ENCODE measurements at regions of chr6 and their contacts with region 1.

Region 1: GRCh38 chr6:108492131-108492766 is 68.5 kb upstream of the FOXO3 start:
- DNase-seq: no peak
- H3K4me3 Mint-ChIP-seq: no peak overlapping the region
- H3K27ac Mint-ChIP-seq: no peak overlapping the region
- H3K4me1 Mint-ChIP-seq: no peaks in the 10 kb centered on the region
- H3K27me3 Mint-ChIP-seq: peaks cover 2% of the 10 kb centered on the region

Region 2: DNA sequence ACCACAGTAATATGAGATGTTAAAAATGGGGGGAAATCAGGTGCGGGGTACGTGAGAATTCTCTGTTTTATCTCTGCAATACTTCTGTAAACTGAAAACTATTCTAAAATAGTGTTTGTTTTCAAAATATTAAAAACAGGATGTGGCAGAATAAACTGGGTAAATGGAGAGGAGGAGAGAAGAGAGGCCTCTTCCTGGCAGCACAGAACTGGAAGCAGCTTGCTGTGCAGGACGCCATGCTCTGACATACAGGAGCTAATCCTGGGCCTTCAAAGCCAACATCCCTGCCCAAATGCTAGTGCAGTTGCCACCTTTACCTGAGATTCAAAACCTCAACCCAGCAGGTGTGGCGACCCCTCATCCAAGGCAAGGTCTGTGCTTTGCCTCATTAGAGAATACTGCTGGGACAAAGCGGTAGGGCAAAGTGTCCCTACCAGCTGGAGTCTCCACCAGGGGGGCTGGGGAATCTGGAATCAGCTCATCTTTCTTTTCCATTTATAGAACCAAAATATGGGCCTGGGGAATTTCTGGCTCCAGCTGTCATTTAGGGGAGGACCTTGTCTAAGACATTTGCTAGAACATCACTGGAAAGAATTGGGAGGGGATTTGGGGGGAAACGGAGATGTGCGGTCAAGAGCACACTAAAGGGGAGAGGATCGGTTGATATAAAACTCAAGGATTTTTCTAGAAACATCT is 735.4 kb before region 1 on chr6:
- CTCF ChIA-PET with region 1: no interaction called
- intact Hi-C with region 1: no loop called
- DNase-seq: no peak
- H3K4me3 Mint-ChIP-seq: no peak overlapping the region
- H3K27ac Mint-ChIP-seq: peak overlapping the region; percentile 28
- H3K4me1 Mint-ChIP-seq: peaks cover 44% of the 10 kb centered on the region
- H3K27me3 Mint-ChIP-seq: no peaks in the 10 kb centered on the region

Region 3: GRCh38 chr6:107977283-107977682 is 515.0 kb before region 1 on chr6:
- CTCF ChIA-PET with region 1: interaction called, 13 read pairs
- intact Hi-C with region 1: loop called (anchors 10 kb)
- DNase-seq: no peak
- H3K4me3 Mint-ChIP-seq: no peak overlapping the region
- H3K27ac Mint-ChIP-seq: no peak overlapping the region
- H3K4me1 Mint-ChIP-seq: no peaks in the 10 kb centered on the region
- H3K27me3 Mint-ChIP-seq: no peaks in the 10 kb centered on the region

Region 4: GRCh38 chr6:107982486-107982885 is 509.8 kb before region 1 on chr6:
- CTCF ChIA-PET with region 1: interaction called, 13 read pairs
- intact Hi-C with region 1: loop called (anchors 10 kb)
- DNase-seq: no peak
- H3K4me3 Mint-ChIP-seq: no peak overlapping the region
- H3K27ac Mint-ChIP-seq: no peak overlapping the region
- H3K4me1 Mint-ChIP-seq: no peaks in the 10 kb centered on the region
- H3K27me3 Mint-ChIP-seq: no peaks in the 10 kb centered on the region

Region 5: GRCh38 chr6:108174371-108175175 is 317.7 kb before region 1 on chr6:
- CTCF ChIA-PET with region 1: interaction called, 10 read pairs
- intact Hi-C with region 1: loop called (anchors 2 kb)
- DNase-seq: peak; percentile 57
- H3K4me3 Mint-ChIP-seq: no peak overlapping the region
- H3K27ac Mint-ChIP-seq: no peak overlapping the region
- H3K4me1 Mint-ChIP-seq: peaks cover 21% of the 10 kb centered on the region
- H3K27me3 Mint-ChIP-seq: peaks cover 76% of the 10 kb centered on the region

Region 6: DNA sequence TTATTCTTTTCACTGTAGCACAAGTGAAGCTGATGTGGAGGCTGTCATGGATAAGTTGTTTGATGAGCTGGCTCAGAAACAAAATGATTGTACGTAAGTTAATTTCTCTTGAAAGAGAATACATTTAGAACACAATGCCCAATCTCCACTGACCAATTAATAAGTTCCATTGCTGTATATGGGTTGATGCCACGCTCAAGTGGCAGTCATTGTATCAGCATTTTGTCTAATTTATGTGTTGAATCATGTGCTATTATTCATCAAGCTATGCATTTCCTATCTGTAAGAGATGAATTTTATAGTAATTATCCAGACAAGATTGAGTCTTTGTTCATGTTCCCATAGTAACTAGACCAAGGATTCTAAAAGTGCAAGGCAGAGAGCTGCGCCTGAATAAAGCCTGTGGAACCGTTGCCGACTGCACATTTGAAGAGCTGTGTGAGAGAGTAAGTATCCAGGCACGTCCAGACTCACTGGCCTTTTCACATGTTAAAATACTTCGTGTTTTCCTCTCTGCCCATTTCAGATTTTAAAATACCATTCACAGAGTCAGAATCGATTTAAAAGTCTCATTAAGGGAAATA is 15.3 kb before region 1 on chr6:
- CTCF ChIA-PET with region 1: interaction called, 14 read pairs
- intact Hi-C with region 1: no loop called
- DNase-seq: no peak
- H3K4me3 Mint-ChIP-seq: no peak overlapping the region
- H3K27ac Mint-ChIP-seq: no peak overlapping the region
- H3K4me1 Mint-ChIP-seq: peaks cover 3% of the 10 kb centered on the region
- H3K27me3 Mint-ChIP-seq: peaks cover 6% of the 10 kb centered on the region

Region 7: DNA sequence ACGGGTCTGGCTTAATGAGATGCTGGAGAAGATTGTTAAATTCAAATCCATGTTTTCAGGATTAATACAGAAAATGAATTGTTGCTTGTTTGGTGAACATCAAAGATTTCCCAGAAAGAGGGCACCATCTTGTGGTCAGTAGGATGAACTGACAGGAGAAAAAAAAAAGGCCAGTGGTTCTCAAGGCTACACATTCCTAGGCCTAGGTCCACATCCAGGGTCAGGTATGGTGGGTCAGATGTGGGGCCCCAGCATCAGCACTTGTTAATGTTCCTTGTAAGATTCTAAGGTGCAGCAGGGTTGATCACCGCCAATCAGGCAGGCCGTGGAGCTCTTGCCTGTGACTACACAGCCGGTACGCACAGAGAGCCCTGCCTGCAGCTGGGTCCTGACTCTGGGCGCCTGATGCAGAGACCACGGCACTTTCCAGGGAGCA is 34.5 kb after region 1 on chr6:
- CTCF ChIA-PET with region 1: interaction called, 14 read pairs
- intact Hi-C with region 1: no loop called
- DNase-seq: no peak
- H3K4me3 Mint-ChIP-seq: no peak overlapping the region
- H3K27ac Mint-ChIP-seq: no peak overlapping the region
- H3K4me1 Mint-ChIP-seq: no peaks in the 10 kb centered on the region
- H3K27me3 Mint-ChIP-seq: no peaks in the 10 kb centered on the region

Region 8: DNA sequence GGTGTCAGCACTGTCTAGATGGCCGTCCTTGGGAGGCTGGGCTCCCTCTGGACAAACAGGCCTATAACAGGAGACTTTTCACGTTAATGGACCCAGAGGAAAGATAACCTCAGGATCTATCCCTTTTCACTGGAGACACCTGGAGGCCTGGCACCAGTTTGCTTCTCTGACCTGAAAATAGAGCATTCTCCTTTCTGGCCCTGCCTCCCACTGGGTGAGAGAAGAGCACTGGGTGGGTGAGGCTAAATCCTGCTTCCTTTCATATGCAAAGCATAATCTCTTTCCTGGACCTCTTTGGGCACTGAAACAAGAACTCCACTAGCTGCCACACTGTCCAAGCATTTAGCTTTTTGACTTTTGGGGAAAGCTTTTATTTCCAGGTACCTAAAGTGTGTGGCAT is 146.7 kb after region 1 on chr6:
- CTCF ChIA-PET with region 1: no interaction called
- intact Hi-C with region 1: no loop called
- DNase-seq: no peak
- H3K4me3 Mint-ChIP-seq: no peak overlapping the region
- H3K27ac Mint-ChIP-seq: no peak overlapping the region
- H3K4me1 Mint-ChIP-seq: peaks cover 36% of the 10 kb centered on the region
- H3K27me3 Mint-ChIP-seq: no peaks in the 10 kb centered on the region

Region 9: DNA sequence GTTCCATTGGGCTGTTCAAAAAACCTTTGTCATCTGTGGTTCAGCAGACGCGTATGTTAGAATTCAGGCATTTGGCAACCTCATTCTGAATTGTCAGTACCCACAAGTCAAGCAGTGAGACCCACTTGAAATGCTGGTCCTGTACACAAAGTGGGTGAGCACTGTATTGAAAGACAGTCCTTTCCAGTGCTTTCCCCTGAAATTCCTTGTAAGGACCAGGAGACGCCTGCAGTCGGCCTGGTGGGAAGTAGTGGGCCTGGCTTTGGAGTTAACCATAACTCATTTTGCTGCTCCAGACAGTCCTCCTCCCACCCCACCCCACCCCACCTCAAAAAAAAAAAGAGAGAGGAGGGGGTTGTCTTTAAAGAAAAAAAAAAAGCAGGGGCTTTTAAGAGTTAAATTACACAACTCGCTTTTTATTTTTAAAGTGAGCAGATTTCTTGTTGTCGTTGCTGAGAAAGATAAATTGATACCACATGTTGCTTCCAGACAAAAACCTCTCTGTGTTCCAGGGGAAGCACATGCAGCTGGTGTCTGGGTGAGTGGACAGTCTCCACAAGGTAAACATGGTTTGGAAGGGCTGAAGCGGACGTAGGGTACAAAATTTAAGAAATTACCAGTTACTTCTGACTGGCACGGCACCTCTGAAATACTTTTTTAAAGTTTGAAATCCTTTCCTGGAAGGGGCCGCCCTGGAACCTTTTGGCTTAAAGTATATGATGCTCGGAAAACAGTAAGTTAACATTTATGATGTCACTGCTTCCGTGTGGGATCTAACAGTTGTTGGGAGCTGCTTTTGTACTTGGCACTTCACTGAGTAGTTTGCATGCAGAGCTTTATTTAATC is 163.8 kb after region 1 on chr6:
- CTCF ChIA-PET with region 1: no interaction called
- intact Hi-C with region 1: no loop called
- DNase-seq: no peak
- H3K4me3 Mint-ChIP-seq: no peak overlapping the region
- H3K27ac Mint-ChIP-seq: no peak overlapping the region
- H3K4me1 Mint-ChIP-seq: peaks cover 18% of the 10 kb centered on the region
- H3K27me3 Mint-ChIP-seq: no peaks in the 10 kb centered on the region

Measured in activated naive CD4-positive, alpha-beta T cell treated with anti-CD3 and anti-CD28 coated beads for 36 hours (primary cell).